Pancreas (tissue), 10 donors: ENCODE measurements at regions of chr10 and their contacts with region 1.

Region 1: DNA sequence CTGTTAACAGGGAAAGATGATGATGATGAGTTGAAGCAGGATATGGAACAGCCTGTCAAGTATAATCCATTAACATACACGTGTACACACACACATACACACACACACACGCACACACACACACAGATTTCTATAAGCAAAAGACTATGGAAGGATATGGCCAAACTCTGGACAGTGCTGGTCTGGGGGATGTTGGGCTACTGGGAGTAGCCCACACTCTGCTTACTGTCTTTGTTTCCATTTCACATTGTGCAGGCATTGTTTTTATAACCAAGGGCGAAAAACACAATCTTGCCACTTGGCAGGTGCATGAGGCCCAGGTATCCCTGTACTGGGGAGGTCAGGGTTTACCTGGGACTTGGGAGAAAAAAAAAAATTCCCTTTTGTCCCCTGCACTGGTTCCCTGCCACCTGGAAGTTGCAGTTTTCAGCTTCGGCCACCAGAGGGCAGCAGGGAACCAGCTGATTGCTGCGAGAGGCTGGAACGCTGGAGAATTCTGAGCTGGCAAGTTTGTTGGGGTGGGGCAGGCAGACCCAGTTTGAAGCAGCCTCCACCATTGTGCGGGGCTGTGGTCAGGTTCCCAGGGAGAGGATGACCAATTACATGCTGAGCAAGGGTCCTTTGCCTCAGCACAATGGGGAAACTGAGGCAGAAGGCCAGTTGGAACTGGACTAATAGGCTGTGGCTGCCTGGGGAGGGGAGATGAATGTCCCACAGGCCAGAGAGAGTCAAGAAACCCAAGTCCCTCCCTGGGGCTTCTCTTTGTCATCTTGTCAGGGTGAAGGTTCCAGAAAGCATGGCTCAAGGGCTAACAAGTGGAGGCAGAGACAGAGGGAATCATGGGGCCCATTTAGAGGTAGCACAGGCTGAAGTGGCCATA is 27.3 kb downstream of the PPIF start:
- DNase-seq: peak; percentile 61 to 97 (median 85)
- ATAC-seq: peak; percentile 79 to 95 (median 90)
- H3K4me3 ChIP-seq: no peak overlapping the region
- H3K27ac ChIP-seq: no peak overlapping the region
- H3K4me1 ChIP-seq: no peaks in the 10 kb centered on the region
- H3K27me3 ChIP-seq: no peaks in the 10 kb centered on the region
- CTCF ChIP-seq: peak; percentile 91 to 98 (median 96)

Region 2: GRCh38 chr10:79093658-79094411 is 280.7 kb before region 1 on chr10:
- intact Hi-C with region 1: no loop called
- DNase-seq: peak; percentile 81 to 89 (median 82)
- ATAC-seq: peak; percentile 82 to 86 (median 85)
- H3K4me3 ChIP-seq: no peak overlapping the region
- H3K27ac ChIP-seq: peak overlapping the region; percentile 64 to 83 (median 70)
- H3K4me1 ChIP-seq: peaks cover 37 to 52% (median 39%) of the 10 kb centered on the region in 3 donors
- H3K27me3 ChIP-seq: no peaks in the 10 kb centered on the region
- CTCF ChIP-seq: no peak

Region 3: DNA sequence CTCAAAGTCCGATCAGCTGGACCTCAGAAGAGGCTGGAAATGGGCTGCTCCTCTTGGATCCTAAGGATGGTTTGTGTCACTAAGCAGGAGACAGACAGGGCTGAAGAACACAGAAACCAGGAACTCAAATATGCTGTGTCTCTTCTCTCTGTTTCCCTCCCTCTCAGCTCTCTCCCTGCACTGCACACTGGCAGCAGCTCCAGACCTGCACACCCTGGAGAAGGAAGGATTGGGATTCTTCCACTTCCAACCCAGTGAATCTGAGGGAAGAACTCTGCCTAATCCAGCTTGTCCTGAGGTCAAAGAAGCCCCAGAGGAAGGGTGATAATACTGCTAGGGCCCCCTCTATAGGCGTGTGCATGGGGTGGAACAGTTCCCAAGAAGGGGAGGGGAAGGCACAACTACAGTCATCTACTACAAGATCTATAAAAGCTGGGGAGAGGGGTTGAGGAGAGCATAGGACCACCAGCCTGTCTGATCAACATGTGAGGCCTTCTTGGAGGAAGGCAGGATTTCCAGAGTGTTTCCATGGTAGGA is 93.5 kb after region 1 on chr10:
- intact Hi-C with region 1: loop called in 1 of 3 experiments (anchors 5 kb)
- DNase-seq: no peak
- ATAC-seq: peak; percentile 12 to 61 (median 36)
- H3K4me3 ChIP-seq: no peak overlapping the region
- H3K27ac ChIP-seq: peak overlapping the region in 1 of 4 donors; percentile 27
- H3K4me1 ChIP-seq: no peaks in the 10 kb centered on the region
- H3K27me3 ChIP-seq: no peaks in the 10 kb centered on the region
- CTCF ChIP-seq: no peak

Region 4: GRCh38 chr10:79487296-79488194 is 113.0 kb after region 1 on chr10:
- intact Hi-C with region 1: loop called in 2 of 3 experiments (anchors 5 kb)
- DNase-seq: peak; percentile 40 to 70 (median 62)
- ATAC-seq: peak; percentile 63 to 87 (median 85)
- H3K4me3 ChIP-seq: no peak overlapping the region
- H3K27ac ChIP-seq: peak overlapping the region in 1 of 4 donors; percentile 22
- H3K4me1 ChIP-seq: no peaks in the 10 kb centered on the region
- H3K27me3 ChIP-seq: no peaks in the 10 kb centered on the region
- CTCF ChIP-seq: peak; percentile 44 to 72 (median 64)

Region 5: GRCh38 chr10:79562135-79562756 is 187.7 kb after region 1 on chr10:
- intact Hi-C with region 1: no loop called
- DNase-seq: peak; percentile 60 to 86 (median 70)
- ATAC-seq: peak; percentile 78 to 93 (median 88)
- H3K4me3 ChIP-seq: no peak overlapping the region
- H3K27ac ChIP-seq: no peak overlapping the region
- H3K4me1 ChIP-seq: peaks cover 0 to 15% (median 9%) of the 10 kb centered on the region in 3 donors
- H3K27me3 ChIP-seq: no peaks in the 10 kb centered on the region
- CTCF ChIP-seq: peak; percentile 53 to 72 (median 68)